Cardiac septum (tissue), 1 donor: ENCODE measurements at regions of chr14 and their contacts with region 1.

Region 1: DNA sequence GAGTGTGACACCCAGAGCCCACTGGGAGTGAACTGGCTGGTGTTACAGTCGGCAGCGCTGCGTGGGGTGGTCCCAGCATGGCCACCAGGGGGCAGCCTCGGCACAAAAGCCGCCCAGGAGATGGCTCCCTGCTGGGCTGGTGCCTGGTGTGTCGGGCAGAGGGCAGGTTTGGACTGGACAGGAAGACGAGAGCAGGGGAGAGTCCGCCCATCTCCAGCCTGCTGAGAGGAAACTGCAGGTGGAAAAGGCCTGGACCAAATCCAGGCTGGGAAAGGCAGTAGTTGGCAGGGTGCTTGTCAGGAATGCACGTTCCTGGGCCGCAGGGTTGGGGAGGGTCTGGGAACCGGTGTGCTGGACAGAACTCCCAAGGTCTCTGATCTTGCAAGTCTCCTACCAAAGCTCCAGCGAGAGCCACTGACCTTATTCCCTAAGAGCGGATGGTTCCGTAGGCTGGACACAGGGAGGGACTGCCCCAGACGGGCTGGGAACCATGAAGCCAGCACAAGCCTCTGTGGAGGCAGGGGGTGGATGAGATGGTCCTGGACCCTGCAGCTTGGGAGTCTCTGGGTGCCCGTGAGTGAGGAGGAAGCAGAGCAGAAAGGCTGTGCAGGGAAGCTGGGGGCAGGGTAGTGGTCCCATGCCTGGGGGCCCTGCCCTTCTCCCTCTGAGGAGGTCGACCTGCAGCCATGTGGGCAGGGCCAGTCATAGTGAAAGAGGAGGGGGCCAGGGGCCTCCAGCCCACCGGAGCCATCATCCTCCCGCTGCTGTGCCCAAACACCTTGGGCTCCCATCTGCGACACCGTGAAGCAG is 1.8 kb downstream of the AHNAK2 start:
- DNase-seq: peak; percentile 93

Region 2: GRCh38 chr14:105045710-105046326 is 69.4 kb after region 1 on chr14:
- intact Hi-C with region 1: loop called (anchors 2 kb)
- DNase-seq: peak; percentile 96

Region 3: GRCh38 chr14:105086833-105087307 is 110.5 kb after region 1 on chr14:
- intact Hi-C with region 1: loop called (anchors 2 kb)
- DNase-seq: peak; percentile 93

Region 4: DNA sequence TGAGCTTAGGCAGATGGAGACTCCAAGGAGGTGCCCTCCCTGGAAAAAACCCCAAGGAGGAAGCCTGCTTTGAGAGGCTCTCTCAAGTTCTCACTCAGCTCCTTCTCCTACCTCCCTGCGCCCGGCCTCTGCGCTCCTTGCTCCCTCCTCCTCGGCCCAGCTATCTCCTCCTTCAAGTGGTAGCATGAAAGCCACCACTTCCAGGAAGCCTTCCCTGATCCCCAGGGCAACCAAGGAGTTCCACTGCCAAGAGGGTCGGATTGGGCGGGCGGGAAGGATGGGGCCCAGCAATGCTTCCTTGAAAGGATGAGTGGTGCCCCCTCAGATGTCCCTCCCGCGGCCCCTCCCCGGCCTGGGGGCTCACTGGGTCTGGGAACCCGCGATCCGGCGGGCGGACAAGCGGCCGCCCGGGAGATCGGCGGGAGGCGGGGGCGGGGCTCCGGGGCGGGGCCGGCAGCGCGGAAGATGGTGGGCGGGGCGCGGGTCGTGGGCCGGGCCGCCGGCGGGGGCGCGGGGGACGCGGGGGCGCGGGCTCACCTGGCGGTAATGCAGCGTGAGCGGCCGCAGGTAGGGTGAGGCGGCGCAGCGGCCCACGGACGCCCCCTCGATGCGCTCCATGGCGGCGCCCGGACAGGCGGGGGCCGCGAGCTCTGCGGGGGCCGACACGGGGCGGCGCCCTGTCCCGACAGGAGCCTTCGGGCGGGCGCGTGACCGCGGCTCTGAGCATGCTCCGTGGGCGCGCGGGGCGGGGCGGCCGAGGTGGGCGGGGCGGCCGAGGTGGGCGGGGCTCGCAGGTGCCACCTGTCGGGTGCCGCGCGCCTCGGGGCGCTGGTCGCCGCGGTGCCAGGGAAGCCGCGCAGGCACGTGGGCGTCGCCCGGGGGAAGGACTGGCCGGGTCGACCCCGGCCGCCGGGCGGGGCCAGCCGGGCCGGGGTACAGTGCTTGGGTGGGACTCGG is 204.5 kb after region 1 on chr14 and contains the start of gene NUDT14:
- intact Hi-C with region 1: loop called (anchors 10 kb)
- DNase-seq: no peak
- total RNA-seq, gene NUDT14: 27.1 TPM